ENCODE measurements at regions of chr10 and their contacts with region 1.

Region 1: DNA sequence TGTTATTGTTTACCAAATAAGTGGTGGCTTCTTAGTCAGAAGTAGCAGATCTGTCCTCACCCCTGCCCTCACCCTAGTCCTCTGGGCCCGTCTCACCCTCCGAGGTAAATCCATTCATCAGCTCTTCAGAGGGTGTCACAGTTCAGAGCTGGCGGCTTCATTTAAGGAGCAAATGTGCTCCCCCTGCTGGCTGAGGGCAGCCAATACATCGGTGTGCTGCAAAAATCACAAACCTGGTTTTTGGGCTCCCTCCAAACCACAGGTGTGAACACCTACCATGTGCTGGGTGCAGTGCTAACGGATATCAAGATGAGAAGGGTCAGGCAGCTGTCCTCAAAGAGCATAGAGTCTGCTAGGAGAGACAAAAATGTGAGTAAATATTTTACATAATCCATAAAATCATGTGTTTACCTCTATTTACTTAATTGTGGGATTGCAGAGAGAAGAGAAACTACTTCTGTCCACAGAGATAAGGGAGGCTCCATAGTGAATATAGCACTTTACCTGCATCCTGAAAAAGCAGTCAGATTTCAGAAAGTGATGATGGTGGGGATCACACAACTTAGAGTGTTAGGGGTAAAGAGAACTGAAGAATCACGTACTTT is 15.5 kb upstream of the CRTAC1 start:
- DNase-seq: peak; percentile 49 to 79
- H3K4me3 ChIP-seq: no peak overlapping the region
- H3K27ac ChIP-seq: no peak overlapping the region
- H3K4me1 ChIP-seq: no peaks in the 10 kb centered on the region
- H3K27me3 ChIP-seq: peaks cover 0 to 12% (median 6%) of the 10 kb centered on the region in 4 experiments; a peak in 4 of 7 replicates
- CTCF ChIP-seq: peak; percentile 68 to 88 (median 73)
- EP300 ChIP-seq: no peak
- POLR2A ChIP-seq: no peak
- RAD21 ChIP-seq: peak; percentile 55 to 70

Region 2: GRCh38 chr10:97888641-97889262 is 157.1 kb before region 1 on chr10:
- CTCF ChIA-PET with region 1: interaction called, 12 read pairs
- POLR2A ChIA-PET with region 1: no interaction called
- DNase-seq: peak in 1 of 2 experiments; percentile 36
- H3K4me3 ChIP-seq: peak overlapping the region in 1 of 4 experiments; percentile 40; a peak in 1 of 8 replicates
- H3K27ac ChIP-seq: no peak overlapping the region
- H3K4me1 ChIP-seq: peaks cover 0 to 18% (median 13%) of the 10 kb centered on the region in 4 experiments; a peak in 6 of 7 replicates
- H3K27me3 ChIP-seq: no peaks in the 10 kb centered on the region; a peak in 1 of 7 replicates
- CTCF ChIP-seq: peak in 1 of 3 experiments; percentile 3; a peak in 1 of 4 replicates
- EP300 ChIP-seq: no peak
- POLR2A ChIP-seq: no peak
- RAD21 ChIP-seq: no peak

Region 3: DNA sequence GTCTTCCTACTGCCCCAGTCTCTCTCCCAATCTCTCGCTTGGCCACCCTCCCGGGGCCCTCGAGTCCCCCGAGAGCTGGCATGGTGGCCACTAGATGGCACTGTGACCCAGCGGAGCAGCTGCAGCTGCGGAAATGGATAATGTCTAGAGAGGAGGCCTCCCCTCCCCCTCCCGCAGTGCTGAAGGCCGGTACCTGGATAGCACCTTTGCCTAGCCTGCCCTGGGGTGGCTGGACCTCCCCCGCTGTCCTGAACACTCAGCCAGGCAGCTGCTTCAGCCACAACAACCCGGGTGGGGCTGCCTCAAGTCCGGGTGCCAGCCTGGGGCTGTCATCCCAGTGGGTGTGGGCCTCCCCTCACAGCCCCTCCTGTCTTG is 131.1 kb before region 1 on chr10:
- CTCF ChIA-PET with region 1: interaction called, 246 read pairs
- POLR2A ChIA-PET with region 1: interaction called, 3 read pairs
- DNase-seq: peak; percentile 46 to 95
- H3K4me3 ChIP-seq: no peak overlapping the region
- H3K27ac ChIP-seq: no peak overlapping the region
- H3K4me1 ChIP-seq: peaks cover 0 to 6% (median 1%) of the 10 kb centered on the region in 4 experiments; a peak in 2 of 7 replicates
- H3K27me3 ChIP-seq: peaks cover 0 to 6% (median 1%) of the 10 kb centered on the region in 4 experiments; a peak in 3 of 7 replicates
- CTCF ChIP-seq: peak; percentile 75 to 97 (median 87)
- EP300 ChIP-seq: 0 out of 3 replicates have a peak, but pooled peaks of 1 of the 2 experiments have one; percentile 24
- POLR2A ChIP-seq: no peak
- RAD21 ChIP-seq: peak; percentile 99

Region 4: GRCh38 chr10:97939446-97939990 is 106.4 kb before region 1 on chr10:
- CTCF ChIA-PET with region 1: interaction called, 14 read pairs
- POLR2A ChIA-PET with region 1: no interaction called
- DNase-seq: no peak
- H3K4me3 ChIP-seq: no peak overlapping the region
- H3K27ac ChIP-seq: no peak overlapping the region
- H3K4me1 ChIP-seq: no peaks in the 10 kb centered on the region; a peak in 1 of 7 replicates
- H3K27me3 ChIP-seq: no peaks in the 10 kb centered on the region
- CTCF ChIP-seq: no peak
- EP300 ChIP-seq: no peak
- POLR2A ChIP-seq: no peak
- RAD21 ChIP-seq: no peak

Region 5: GRCh38 chr10:97981816-97982215 is 64.1 kb before region 1 on chr10:
- CTCF ChIA-PET with region 1: interaction called, 14 read pairs
- POLR2A ChIA-PET with region 1: no interaction called
- DNase-seq: no peak
- H3K4me3 ChIP-seq: no peak overlapping the region
- H3K27ac ChIP-seq: no peak overlapping the region
- H3K4me1 ChIP-seq: no peaks in the 10 kb centered on the region
- H3K27me3 ChIP-seq: no peaks in the 10 kb centered on the region; a peak in 3 of 7 replicates
- CTCF ChIP-seq: no peak
- EP300 ChIP-seq: no peak
- POLR2A ChIP-seq: no peak
- RAD21 ChIP-seq: no peak

Region 6: GRCh38 chr10:98028168-98028770 is 17.6 kb before region 1 on chr10:
- CTCF ChIA-PET with region 1: interaction called, 318 read pairs
- POLR2A ChIA-PET with region 1: interaction called, 15 read pairs
- DNase-seq: peak; percentile 34 to 89
- H3K4me3 ChIP-seq: no peak overlapping the region
- H3K27ac ChIP-seq: no peak overlapping the region
- H3K4me1 ChIP-seq: peaks cover 2 to 7% (median 6%) of the 10 kb centered on the region in 4 experiments; a peak in 5 of 7 replicates
- H3K27me3 ChIP-seq: peaks cover 40 to 50% (median 49%) of the 10 kb centered on the region in 4 experiments
- CTCF ChIP-seq: peak; percentile 86 to 98 (median 97)
- EP300 ChIP-seq: no peak
- POLR2A ChIP-seq: no peak
- RAD21 ChIP-seq: peak; percentile 81 to 91

Region 7: GRCh38 chr10:98074315-98074911 is 28.5 kb after region 1 on chr10:
- CTCF ChIA-PET with region 1: interaction called, 11 read pairs
- POLR2A ChIA-PET with region 1: no interaction called
- DNase-seq: no peak
- H3K4me3 ChIP-seq: no peak overlapping the region
- H3K27ac ChIP-seq: no peak overlapping the region
- H3K4me1 ChIP-seq: no peaks in the 10 kb centered on the region
- H3K27me3 ChIP-seq: no peaks in the 10 kb centered on the region
- CTCF ChIP-seq: no peak
- EP300 ChIP-seq: no peak
- POLR2A ChIP-seq: no peak
- RAD21 ChIP-seq: no peak

Region 8: DNA sequence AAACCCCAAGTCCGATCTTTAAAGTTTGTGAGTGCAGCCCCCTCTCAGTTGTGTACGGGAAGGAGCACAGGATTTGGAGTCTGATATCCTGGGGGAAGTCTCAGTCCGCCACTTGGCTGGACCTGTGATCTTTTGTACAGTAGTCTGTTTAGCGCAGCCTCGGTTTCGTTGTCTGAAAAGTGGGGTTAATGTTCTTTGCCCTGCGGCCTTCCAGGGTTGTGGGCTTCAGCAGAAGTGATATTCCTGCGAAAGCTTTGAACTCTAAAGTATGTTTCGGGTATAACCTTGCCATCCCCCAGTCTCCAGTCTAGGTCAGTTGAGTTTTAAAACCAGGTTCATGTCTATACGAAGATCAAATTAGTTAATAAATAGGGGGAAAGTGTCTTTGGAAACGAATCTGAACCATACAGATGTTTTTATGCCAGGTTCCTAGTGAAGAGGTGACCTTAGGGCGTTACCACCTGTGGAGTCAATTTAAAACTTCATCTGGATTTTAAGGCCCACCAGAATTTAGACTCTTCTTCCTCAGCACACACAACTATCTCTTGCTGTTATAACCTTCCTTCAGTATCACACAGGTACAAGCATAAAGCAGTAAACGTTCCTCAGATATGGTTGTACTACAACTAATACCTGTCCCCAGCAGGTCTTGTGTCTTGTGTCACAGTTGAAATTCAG is 89.5 kb after region 1 on chr10:
- CTCF ChIA-PET with region 1: no interaction called
- POLR2A ChIA-PET with region 1: no interaction called
- DNase-seq: no peak
- H3K4me3 ChIP-seq: peak overlapping the region; percentile 81 to 92 (median 92)
- H3K27ac ChIP-seq: no peak overlapping the region
- H3K4me1 ChIP-seq: peaks cover 0 to 3% (median 0%) of the 10 kb centered on the region in 4 experiments; a peak in 1 of 7 replicates
- H3K27me3 ChIP-seq: no peaks in the 10 kb centered on the region
- CTCF ChIP-seq: no peak
- EP300 ChIP-seq: no peak
- POLR2A ChIP-seq: no peak
- RAD21 ChIP-seq: no peak